PC-9 (cell line): ENCODE measurements at regions of chr15 and their contacts with region 1.

Region 1: DNA sequence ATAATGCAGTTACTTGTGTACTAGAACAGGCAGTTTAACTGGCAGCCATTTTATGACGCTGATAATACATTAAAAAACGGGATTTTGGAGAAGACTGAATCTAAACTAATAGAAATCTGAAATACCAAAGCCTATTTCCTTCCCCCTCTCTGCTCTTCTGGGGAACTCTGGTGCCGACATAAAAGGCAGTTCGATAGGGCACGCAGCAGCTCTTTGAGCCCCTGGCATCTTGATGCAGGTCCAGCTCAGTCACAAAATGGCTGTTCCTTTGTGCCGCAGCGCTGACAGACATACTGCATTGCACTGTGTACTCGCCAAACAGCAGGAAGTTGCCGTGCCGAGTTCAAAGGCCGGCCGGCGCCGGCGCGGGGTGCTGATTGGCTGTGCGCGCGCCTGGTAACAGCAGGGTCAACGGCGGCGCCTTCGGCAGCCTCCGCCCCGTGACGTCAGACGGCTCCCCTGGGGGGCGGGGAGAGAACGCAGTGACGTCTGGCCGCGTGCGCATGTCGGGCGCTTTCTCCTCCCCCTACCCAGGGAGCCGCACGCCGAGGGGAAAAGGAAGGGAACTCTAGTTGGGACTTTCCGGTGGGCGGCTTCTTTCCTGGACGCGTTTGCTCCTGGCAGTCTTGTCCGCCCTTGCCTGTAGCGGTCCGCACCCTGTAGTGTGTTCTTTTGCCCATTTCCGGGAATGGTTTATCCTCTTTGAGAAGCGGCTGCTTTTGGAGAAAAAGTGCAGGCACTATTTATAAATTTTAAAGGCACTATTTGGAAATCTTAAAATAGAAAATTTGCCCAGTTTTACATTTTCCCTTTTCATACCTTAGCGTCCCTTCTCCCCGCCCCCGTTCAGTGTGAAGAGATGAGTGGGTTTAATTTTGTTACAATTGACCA is 4.1 kb downstream of the CHD2 start:
- DNase-seq: peak; percentile 93 to 99
- H3K4me3 ChIP-seq: peak overlapping the region; percentile 94
- H3K27ac ChIP-seq: peak overlapping the region; percentile 98
- H3K4me1 ChIP-seq: peaks cover 45% of the 10 kb centered on the region
- H3K27me3 ChIP-seq: no peaks in the 10 kb centered on the region
- CTCF ChIP-seq: no peak

Region 2: DNA sequence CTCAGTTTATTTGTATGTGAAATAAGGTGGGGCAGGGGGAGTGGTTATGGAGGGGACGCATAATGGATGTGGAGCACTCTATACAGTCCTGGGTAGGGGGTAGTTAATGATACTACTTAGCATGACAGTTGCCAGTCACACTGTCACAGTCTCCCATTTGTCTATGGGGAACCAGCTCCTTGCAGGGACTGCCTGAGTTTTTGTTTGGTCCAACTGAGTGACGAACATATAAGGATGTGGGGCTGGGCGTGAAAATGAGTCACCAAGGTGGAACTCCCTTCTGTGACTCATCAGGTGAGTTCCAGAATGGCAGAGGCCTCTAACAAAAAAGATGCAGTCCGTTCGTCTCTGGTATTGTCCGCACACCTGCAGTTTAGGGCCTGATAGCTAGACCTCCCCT is 745.8 kb before region 1 on chr15:
- CTCF ChIA-PET with region 1: no interaction called
- POLR2A ChIA-PET with region 1: interaction called, 10 read pairs
- intact Hi-C with region 1: no loop called
- DNase-seq: peak; percentile 69 to 83
- H3K4me3 ChIP-seq: no peak overlapping the region
- H3K27ac ChIP-seq: peak overlapping the region; percentile 43
- H3K4me1 ChIP-seq: peaks cover 16% of the 10 kb centered on the region
- H3K27me3 ChIP-seq: no peaks in the 10 kb centered on the region
- CTCF ChIP-seq: no peak

Region 3: GRCh38 chr15:92797168-92797951 is 106.8 kb before region 1 on chr15:
- CTCF ChIA-PET with region 1: interaction called, 13 read pairs
- POLR2A ChIA-PET with region 1: interaction called, 10 read pairs
- intact Hi-C with region 1: no loop called
- DNase-seq: peak in 1 of 2 experiments; percentile 71
- H3K4me3 ChIP-seq: no peak overlapping the region
- H3K27ac ChIP-seq: peak overlapping the region; percentile 38; the same call in 1 of the 2 replicates
- H3K4me1 ChIP-seq: peaks cover 23% of the 10 kb centered on the region; the same call in 1 of the 2 replicates
- H3K27me3 ChIP-seq: no peaks in the 10 kb centered on the region
- CTCF ChIP-seq: peak; percentile 82

Region 4: GRCh38 chr15:92803847-92804609 is 100.2 kb before region 1 on chr15:
- CTCF ChIA-PET with region 1: interaction called, 8 read pairs
- POLR2A ChIA-PET with region 1: interaction called, 10 read pairs
- intact Hi-C with region 1: loop called (anchors 1 kb)
- DNase-seq: peak; percentile 92 to 100
- H3K4me3 ChIP-seq: no peak overlapping the region; the same call in 1 of the 2 replicates
- H3K27ac ChIP-seq: peak overlapping the region; percentile 98
- H3K4me1 ChIP-seq: peaks cover 57% of the 10 kb centered on the region
- H3K27me3 ChIP-seq: no peaks in the 10 kb centered on the region
- CTCF ChIP-seq: no peak

Region 5: DNA sequence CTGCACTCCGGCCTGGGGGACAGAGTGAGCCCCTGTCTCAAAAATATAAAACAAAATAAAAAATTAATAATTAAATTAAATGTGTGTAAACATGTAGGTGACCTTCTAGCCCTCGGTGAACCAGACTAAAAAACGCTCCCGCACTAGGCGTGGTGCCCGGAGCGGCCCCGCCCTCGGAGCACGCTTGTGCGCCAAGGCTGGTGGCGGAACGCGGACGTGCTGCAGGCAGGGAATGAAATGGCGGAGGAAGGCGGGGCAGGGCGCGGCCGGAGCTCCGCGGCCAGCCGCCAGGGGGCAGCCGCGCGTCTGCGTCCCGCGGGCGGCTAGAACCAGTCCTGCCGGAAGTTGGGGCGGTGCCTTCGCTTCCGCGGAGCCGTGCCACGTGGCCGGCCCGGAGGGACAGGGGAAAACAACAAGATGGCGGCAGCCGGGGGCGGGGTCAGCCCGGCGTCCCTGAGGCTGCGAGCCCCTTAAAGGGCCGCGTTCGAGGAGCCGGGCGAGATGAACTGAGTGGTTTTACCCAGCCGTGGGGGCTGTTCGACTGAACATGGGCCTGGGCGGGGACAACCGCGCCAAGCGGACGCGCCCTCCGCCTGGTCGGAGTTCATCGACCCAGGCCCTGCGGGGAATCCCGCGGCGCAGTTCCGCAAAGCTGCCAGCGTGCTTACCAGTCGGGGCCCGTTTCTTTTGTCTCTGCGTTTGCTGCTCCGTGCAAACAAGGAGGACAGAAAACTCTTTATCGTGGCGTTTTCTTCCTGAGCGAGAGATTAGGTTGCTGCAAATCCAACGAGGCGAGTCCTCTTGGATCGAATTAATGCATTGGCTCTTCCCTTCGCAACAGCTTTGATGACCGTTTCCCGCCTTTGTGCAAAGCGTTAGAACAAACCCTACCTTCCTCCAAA is 95.0 kb before region 1 on chr15:
- CTCF ChIA-PET with region 1: interaction called, 8 read pairs
- POLR2A ChIA-PET with region 1: interaction called, 30 read pairs
- intact Hi-C with region 1: loop called (anchors 1 kb)
- DNase-seq: peak; percentile 83 to 98
- H3K4me3 ChIP-seq: peak overlapping the region; percentile 84
- H3K27ac ChIP-seq: peak overlapping the region; percentile 99
- H3K4me1 ChIP-seq: peaks cover 66% of the 10 kb centered on the region
- H3K27me3 ChIP-seq: no peaks in the 10 kb centered on the region
- CTCF ChIP-seq: peak; percentile 81

Region 6: DNA sequence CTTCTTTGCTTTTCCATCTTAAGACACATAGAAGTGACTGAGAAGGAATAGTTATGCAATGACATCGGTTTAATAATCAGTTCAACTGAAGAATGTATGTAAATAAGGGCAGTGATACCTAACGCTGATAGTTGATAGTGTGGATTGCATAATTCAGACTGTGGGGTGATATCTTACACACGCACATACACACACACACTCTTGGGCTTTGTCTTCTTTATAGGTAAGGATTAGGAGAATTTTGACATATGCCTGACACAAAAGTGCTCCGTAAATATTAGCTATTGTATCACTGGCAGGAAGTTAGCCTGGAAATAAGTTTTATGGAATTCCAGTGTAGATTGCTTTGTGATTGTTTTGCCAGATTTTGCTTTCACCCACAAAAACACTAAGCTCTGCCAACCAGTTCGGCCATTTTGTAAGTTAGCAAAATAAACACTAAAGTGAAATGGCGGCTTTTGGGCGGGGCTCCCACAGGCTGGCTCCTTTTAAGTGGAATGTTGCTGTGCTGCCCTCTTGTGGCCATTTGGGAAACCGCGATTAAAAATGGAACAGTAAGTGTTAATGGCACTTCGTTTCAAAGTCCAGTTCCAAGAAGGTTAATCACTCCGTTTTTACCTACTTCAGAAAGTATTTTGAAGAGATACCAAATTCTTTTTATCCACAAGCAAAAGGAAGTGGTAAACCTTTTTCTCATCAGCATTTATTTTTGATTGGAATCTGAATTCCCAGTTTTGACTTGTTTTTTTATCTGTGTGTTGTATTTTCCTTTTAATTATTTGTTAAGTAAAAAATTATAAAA is 13.6 kb after region 1 on chr15:
- CTCF ChIA-PET with region 1: interaction called, 9 read pairs
- POLR2A ChIA-PET with region 1: interaction called, 7 read pairs
- intact Hi-C with region 1: loop called (anchors 1 kb)
- DNase-seq: peak; percentile 88 to 94
- H3K4me3 ChIP-seq: peak overlapping the region; percentile 42; the same call in 1 of the 2 replicates
- H3K27ac ChIP-seq: peak overlapping the region; percentile 97
- H3K4me1 ChIP-seq: peaks cover 97% of the 10 kb centered on the region
- H3K27me3 ChIP-seq: no peaks in the 10 kb centered on the region
- CTCF ChIP-seq: peak; percentile 91